Activated CD8-positive, alpha-beta T cell treated with anti-CD3 and anti-CD28 coated beads, Interleukin-2, amount 10 ng/mL, durations not matched to agents 7 days and 5 days (primary cell): ENCODE measurements at regions of chr1 and their contacts with region 1.

Region 1: DNA sequence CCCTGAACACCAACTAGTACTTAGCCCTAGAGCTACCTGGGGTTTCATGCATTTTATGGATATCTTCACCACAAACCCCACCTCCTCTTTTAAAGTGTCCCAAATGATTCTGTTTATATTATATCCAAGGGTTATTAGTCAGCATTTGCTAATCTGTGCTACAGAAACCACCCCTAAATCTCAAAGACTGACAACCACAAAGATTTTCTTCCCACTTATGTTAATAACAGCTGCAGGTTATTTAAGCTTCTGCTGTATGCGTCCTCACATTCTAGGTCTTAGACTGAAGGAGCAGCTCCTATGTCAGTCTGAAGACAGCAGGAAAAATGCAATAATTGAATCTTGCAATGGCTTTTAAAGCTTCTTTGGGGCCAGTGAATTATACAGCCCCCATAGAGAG is 11.2 kb upstream of the PHC2 start:
- DNase-seq: no peak
- ATAC-seq: no peak
- H3K4me3 Mint-ChIP-seq: no peak overlapping the region
- H3K27ac Mint-ChIP-seq: no peak overlapping the region
- H3K4me1 Mint-ChIP-seq: peaks cover 31% of the 10 kb centered on the region
- H3K27me3 Mint-ChIP-seq: peaks cover 37% of the 10 kb centered on the region

Region 2: DNA sequence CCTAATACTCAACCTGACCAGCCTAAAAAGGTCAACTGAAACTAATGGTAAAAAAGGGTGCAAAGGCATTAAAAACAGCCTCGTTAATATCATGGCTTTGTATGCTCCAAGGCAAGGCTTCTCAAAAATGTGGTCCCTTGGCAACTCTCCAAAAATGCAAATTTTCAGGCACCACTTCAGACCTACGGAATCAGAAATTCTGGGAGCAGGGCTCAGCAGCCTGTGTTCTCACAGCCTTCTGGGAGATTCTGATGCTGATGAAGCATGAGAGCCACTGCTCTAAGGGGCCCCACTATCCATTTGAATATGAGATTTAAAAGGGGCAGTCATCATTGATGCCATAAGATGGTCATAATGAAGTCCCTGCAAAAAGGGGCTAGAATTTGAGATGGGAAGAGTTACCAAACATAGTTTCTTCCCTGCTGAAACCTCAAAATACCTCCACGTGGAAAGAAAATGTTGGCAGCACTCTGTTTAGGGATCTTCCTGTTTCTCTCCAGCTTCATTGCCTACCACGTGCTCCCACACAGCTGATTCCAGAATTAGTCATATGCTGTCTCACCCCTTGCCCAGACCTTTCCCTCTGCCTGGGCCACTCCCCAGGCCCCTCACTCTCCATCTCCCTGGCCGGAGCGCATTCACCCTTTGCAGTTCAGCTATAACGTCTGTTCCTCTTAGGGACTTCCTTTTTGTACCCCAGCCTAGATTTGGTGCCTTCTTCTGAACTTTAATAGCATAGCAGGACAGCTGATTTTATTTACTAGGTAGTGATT is 57.9 kb before region 1 on chr1:
- CTCF ChIA-PET with region 1: no interaction called
- POLR2A ChIA-PET with region 1: no interaction called
- DNase-seq: no peak
- ATAC-seq: no peak
- H3K4me3 Mint-ChIP-seq: no peak overlapping the region
- H3K27ac Mint-ChIP-seq: no peak overlapping the region
- H3K4me1 Mint-ChIP-seq: peaks cover 25% of the 10 kb centered on the region
- H3K27me3 Mint-ChIP-seq: peaks cover 39% of the 10 kb centered on the region

Region 3: DNA sequence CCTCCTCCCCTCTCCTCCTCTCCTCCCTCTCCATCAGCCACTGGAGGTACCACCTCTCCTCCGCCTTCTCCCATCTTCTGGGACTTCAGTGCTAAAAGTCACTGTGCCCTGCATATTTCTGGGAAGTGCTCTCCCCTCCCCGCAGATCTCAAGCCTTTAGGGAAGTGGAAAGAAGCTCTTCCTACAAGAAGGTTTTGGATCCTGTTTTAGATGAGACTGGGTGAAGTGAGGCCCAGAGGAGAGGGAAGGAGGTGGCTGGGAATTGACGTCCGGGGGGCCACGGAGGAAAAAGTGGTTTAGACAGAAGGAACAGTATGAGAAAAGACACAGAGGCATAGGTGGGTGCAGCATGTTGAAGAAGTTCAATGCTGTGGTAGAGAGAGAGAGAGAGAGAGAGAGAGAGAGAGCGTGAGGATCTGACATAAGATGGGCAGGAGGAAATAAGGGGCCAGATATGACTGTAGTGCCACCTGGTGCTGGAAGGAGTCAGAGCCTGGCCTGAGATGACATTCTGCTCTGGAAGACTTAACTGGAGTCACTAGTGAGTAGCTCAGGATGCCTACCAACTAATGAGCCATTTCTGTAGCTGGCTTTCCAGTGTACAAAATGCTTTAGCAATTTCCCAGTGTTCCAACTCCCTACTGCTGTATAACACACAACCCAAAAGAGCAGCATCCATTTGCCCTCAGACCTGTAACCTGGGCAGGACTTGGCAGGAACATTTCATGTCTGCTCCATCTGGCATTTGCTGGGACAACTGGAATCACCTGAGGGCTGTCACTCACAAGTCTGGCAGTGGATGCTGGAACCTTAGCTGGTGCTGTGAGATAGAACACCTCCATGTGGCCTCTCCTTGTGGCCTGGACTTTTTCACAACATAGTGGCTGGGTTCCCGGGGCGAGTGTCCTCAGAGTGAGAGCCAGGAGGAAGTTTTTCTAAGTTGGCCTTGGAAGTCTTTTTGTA is 13.7 kb after region 1 on chr1:
- CTCF ChIA-PET with region 1: interaction called, 18 read pairs
- POLR2A ChIA-PET with region 1: interaction called, 4 read pairs
- DNase-seq: peak; percentile 77
- ATAC-seq: peak; percentile 92
- H3K4me3 Mint-ChIP-seq: no peak overlapping the region
- H3K27ac Mint-ChIP-seq: peak overlapping the region; percentile 30
- H3K4me1 Mint-ChIP-seq: peaks cover 12% of the 10 kb centered on the region
- H3K27me3 Mint-ChIP-seq: peaks cover 24% of the 10 kb centered on the region

Region 4: DNA sequence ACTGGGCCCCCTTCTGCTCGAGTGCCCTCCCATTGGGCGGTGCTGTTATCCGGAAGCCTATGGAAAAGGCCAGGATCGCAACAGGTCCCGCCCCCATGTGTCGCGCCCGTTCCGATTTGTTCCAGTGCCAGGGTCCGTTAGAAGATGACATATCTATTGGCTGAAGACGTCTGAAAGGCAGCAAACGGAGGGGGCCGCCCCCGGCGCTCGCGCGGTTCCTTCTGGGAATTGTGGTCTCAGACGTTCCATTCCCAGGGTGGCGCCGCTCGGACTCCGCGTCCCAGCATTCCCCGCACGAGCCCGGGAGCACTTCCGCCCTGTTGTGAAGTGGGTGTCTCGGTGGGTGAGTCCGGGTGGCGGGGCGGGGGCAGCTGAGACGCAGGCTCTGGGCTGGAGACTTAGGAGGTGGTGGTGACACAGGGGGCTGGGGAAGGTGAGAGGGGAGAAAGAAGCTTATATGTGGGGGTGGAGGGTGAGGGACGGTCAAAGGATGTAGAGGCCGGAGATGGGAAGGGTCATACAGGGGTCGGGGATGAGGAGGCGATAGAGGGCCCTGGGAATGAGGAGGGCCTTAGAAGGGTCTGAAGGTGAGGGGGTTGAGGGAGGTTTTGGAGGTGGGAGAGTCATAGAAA is 30.3 kb after region 1 on chr1 and contains the start of gene ZSCAN20:
- CTCF ChIA-PET with region 1: interaction called, 10 read pairs
- POLR2A ChIA-PET with region 1: no interaction called
- DNase-seq: peak; percentile 91
- ATAC-seq: peak; percentile 98
- H3K4me3 Mint-ChIP-seq: peak within 1 kb of the TSS; percentile 82
- H3K27ac Mint-ChIP-seq: peak within 1 kb of the TSS; percentile 60
- H3K4me1 Mint-ChIP-seq: peaks cover 43% of the 10 kb centered on the region
- H3K27me3 Mint-ChIP-seq: no peaks in the 10 kb centered on the region
- total RNA-seq, gene ZSCAN20: 1.8 to 2.1 TPM

Region 5: DNA sequence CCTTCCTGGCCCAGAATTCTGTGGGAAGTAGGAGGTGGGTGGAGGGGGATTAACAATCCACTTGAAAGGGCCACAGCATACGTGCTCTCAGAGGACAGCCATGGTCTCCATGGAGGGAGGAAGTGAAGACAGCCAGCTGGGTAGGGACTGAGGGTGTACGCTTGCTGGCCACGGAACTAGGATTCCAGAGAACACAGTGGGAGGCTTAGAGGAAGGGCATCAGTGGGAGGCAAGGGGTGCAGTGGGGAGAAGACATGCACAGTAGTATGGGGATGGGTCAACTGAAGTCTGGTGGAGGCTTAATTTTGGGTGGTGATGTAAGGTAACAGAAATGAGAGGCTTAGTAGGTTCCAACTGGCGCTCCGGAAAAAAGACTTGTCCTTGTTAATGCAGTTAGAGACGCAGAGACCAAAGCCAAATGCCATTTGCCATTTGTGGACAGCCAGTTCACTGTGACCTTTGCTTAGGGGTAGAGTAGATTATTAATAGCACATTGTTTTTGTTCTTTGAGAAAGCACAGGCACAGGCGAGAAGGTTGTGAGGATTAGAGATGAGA is 133.3 kb after region 1 on chr1:
- CTCF ChIA-PET with region 1: no interaction called
- POLR2A ChIA-PET with region 1: no interaction called
- DNase-seq: no peak
- ATAC-seq: no peak
- H3K4me3 Mint-ChIP-seq: no peak overlapping the region
- H3K27ac Mint-ChIP-seq: no peak overlapping the region
- H3K4me1 Mint-ChIP-seq: no peaks in the 10 kb centered on the region
- H3K27me3 Mint-ChIP-seq: peaks cover 8% of the 10 kb centered on the region